ENCODE measurements at regions of chr14 and their contacts with region 1.

Region 1: GRCh38 chr14:58297762-58298476 is 436 bp upstream of the ARID4A start:
- DNase-seq: peak; percentile 98
- H3K4me3 Mint-ChIP-seq: no peak overlapping the region
- H3K27ac Mint-ChIP-seq: no peak overlapping the region
- H3K4me1 Mint-ChIP-seq: peaks cover 47% of the 10 kb centered on the region
- H3K27me3 Mint-ChIP-seq: no peaks in the 10 kb centered on the region

Region 2: GRCh38 chr14:58118097-58118815 is 179.7 kb before region 1 on chr14:
- CTCF ChIA-PET with region 1: no interaction called
- POLR2A ChIA-PET with region 1: no interaction called
- DNase-seq: no peak
- H3K4me3 Mint-ChIP-seq: no peak overlapping the region
- H3K27ac Mint-ChIP-seq: no peak overlapping the region
- H3K4me1 Mint-ChIP-seq: no peaks in the 10 kb centered on the region
- H3K27me3 Mint-ChIP-seq: peaks cover 19% of the 10 kb centered on the region

Region 3: GRCh38 chr14:58199726-58200479 is 98.0 kb before region 1 on chr14 and contains the start of gene ACTR10:
- CTCF ChIA-PET with region 1: interaction called, 3 read pairs
- POLR2A ChIA-PET with region 1: interaction called, 22 read pairs
- DNase-seq: peak; percentile 86
- H3K4me3 Mint-ChIP-seq: peak within 1 kb of the TSS; percentile 95
- H3K27ac Mint-ChIP-seq: peak within 1 kb of the TSS; percentile 92
- H3K4me1 Mint-ChIP-seq: peaks cover 38% of the 10 kb centered on the region
- H3K27me3 Mint-ChIP-seq: no peaks in the 10 kb centered on the region
- total RNA-seq, gene ACTR10: 42.3 to 49.2 TPM

Region 4: DNA sequence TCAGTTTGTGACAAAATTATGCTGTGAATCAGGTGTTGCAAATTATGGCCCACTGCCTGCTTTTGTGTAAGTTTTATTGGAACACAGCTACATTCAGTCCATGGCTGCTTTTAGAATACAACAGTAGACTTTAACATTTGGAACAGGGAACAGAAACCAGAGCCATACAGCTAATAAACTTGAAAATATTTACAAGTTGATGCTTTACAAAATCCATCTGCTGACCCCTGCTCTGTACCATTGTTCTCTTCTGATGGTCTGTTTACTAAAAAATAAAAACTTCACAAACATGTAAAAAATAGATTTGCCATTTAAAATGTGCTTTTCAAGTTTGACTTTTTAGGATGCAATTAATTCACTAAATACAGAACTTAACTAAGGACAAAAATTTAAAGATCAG is 32.5 kb before region 1 on chr14:
- CTCF ChIA-PET with region 1: no interaction called
- POLR2A ChIA-PET with region 1: interaction called, 23 read pairs
- DNase-seq: no peak
- H3K4me3 Mint-ChIP-seq: no peak overlapping the region
- H3K27ac Mint-ChIP-seq: no peak overlapping the region
- H3K4me1 Mint-ChIP-seq: peaks cover 5% of the 10 kb centered on the region
- H3K27me3 Mint-ChIP-seq: no peaks in the 10 kb centered on the region

Region 5: DNA sequence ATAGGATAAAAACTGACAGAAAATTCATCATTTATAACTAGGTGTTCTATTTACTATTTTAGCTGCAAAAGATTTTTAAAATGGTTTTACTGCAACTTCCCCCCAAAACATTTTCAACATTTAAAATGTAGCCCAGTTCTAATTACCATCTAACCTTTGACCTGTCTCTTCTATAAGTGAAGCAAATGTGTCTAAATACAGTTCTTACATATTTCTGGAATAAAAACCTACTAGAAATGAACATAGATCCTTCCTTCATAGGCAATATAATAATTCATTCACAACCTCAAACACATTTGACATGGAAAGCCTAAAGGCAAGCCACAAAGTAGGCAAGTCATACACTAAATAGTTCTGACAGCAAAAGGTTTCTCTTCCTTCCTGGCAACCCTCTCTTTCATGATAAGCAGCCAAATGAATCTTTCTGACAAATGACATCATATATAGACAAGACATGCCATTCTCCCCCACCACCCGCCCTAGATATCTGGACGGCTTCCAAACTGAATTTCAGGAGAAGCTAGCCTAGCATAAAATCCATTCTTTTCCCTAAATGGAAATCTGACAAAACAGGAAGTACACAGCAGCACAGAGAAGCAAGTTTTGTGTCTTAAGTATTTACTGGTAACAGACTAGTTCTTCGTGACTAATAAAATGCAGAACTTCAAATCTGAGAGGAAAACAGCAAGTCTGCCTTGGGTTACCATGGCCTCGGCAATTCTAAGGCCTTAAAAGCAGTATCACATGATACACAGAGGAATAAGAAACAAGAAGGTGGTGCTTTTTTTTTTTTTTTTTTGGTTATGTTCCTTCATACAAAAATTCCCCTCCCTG is 16.7 kb before region 1 on chr14:
- CTCF ChIA-PET with region 1: interaction called, 6 read pairs
- POLR2A ChIA-PET with region 1: interaction called, 59 read pairs
- DNase-seq: peak; percentile 28
- H3K4me3 Mint-ChIP-seq: peak overlapping the region; percentile 47
- H3K27ac Mint-ChIP-seq: peak overlapping the region; percentile 92
- H3K4me1 Mint-ChIP-seq: peaks cover 60% of the 10 kb centered on the region
- H3K27me3 Mint-ChIP-seq: no peaks in the 10 kb centered on the region

Region 6: DNA sequence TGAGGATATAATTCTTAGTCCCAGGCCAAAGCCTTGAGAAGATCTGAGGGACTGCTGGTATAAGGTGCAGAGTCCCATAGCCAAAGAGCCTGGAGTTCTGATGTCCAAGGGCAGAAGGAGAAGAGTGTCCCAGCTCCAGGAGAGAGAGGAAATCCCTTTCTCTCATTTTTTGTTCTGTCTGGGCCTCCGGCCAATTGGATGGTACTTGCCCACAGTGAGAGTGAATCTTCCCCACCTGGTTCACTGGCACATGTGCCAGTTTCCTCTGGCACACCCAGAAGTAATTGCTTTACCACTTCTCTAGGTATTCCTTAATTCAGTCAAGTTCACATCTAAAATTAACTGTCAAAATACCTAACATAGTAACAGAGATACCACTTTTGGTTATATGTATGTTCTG is 15.8 kb after region 1 on chr14:
- CTCF ChIA-PET with region 1: no interaction called
- POLR2A ChIA-PET with region 1: interaction called, 27 read pairs
- DNase-seq: no peak
- H3K4me3 Mint-ChIP-seq: no peak overlapping the region
- H3K27ac Mint-ChIP-seq: no peak overlapping the region
- H3K4me1 Mint-ChIP-seq: peaks cover 1% of the 10 kb centered on the region
- H3K27me3 Mint-ChIP-seq: no peaks in the 10 kb centered on the region

Region 7: DNA sequence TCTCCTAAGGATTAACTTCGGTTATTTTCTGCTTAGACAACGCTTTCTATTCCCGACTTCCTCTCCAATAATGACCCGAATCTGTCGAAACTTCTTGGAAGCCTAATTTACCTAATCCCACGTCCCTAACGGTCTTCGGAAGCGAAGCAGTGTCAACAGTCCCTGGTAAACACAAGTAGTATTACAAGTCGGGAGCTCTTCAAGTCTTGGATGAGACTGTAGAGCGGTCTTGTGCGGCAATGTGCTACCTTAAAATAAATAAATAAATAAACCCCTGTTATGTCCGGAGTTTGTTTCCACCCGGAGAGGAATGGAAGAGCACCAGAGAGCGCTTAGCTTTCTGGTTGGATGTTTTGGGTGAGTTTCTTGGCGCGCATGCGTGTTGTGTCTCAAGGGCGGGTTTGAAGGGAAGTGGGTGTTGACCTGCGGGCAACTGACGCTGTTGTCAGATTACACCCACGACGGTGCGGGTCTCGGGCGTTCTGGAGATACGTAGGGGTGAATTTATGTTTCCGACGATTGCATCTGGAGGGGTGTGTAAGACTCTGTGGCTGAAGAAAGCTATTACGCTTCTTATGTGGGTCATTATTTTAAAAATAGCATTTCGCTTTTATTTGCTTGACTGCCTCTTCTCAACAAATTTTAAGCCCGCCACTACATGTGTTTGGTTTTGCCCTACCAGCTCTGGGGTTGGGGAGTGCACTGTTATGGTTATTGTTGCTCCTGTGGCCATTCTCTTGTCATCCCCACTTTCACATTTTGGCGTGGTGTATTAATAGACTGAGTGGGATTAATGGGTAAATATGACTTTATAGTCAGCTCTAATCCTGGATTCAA is 129.6 kb after region 1 on chr14 and contains the starts of genes KIAA0586 and TIMM9:
- CTCF ChIA-PET with region 1: interaction called, 3 read pairs
- POLR2A ChIA-PET with region 1: interaction called, 61 read pairs
- DNase-seq: peak; percentile 97
- H3K4me3 Mint-ChIP-seq: peak within 1 kb of the TSS; percentile 93
- H3K27ac Mint-ChIP-seq: peak within 1 kb of the TSS; percentile 97
- H3K4me1 Mint-ChIP-seq: peaks cover 46% of the 10 kb centered on the region
- H3K27me3 Mint-ChIP-seq: no peaks in the 10 kb centered on the region
- total RNA-seq, gene KIAA0586: 31.7 to 34.6 TPM
- total RNA-seq, gene TIMM9: 37.5 to 40.3 TPM